ENCODE measurements at regions of chr1 and their contacts with region 1.

Region 1: DNA sequence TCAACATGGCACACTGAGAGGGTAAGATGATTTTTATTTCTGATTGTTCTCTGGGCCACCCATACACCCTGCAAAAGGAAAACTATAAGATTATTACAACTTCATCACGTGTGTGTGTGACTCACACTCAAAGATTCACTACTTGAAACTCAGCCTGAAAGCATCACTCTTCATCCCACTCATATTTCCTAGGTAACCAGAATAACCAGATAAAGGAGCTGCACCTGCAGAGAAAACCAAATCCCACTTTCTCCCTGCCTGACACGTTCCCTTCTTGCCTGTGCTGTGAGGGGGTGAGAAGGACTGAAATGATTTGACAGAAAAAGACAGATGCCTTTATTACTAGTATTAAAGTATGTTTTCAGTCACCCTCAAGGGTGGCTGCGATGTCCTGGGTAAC is 131.6 kb downstream of the TGFBR3 start:
- DNase-seq: peak; percentile 69
- ATAC-seq: peak; percentile 81
- H3K4me3 Mint-ChIP-seq: peak overlapping the region; percentile 56
- H3K27ac Mint-ChIP-seq: peak overlapping the region; percentile 92
- H3K4me1 Mint-ChIP-seq: peaks cover 51% of the 10 kb centered on the region
- H3K27me3 Mint-ChIP-seq: no peaks in the 10 kb centered on the region
- CTCF ChIP-seq: no peak

Region 2: DNA sequence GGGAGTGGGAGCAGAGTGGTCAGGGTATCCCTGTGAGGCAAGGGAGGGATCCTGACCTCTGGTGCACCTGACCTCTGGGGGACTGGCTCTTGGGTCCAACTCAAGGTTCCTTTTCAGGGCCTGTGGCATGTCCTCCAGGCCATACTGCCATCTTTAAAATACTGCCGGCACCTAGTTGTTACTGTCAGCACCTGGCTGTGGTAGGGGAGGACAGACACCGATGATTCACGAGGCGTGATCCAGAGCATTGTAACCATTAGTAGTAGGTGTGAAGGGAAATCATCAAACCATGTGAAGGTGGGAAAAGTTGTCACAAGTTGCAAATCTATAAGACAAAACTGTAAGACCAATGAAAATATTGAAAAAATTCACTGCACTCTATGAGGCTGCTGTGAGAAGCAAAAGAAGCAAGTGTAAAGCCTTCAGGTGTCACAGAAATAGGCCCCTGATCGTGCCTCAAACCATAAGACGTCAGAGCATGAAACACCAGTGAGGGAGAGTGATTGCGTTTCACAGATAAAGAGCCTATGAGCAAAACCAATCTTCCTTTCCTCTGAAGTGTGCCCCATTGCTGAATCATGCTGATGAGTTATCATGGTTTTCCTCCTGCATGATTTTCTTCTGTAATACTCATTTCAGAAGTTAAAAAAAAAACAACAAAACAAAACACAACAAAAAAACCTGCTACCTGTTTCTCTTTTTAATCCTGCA is 198.4 kb before region 1 on chr1:
- CTCF ChIA-PET with region 1: no interaction called
- POLR2A ChIA-PET with region 1: no interaction called
- intact Hi-C with region 1: loop called (anchors 10 kb)
- DNase-seq: peak; percentile 81
- ATAC-seq: peak; percentile 85
- H3K4me3 Mint-ChIP-seq: peak overlapping the region; percentile 22
- H3K27ac Mint-ChIP-seq: peak overlapping the region; percentile 91
- H3K4me1 Mint-ChIP-seq: peaks cover 81% of the 10 kb centered on the region
- H3K27me3 Mint-ChIP-seq: no peaks in the 10 kb centered on the region
- CTCF ChIP-seq: no peak

Region 3: GRCh38 chr1:91712981-91713841 is 41.1 kb before region 1 on chr1:
- CTCF ChIA-PET with region 1: no interaction called
- POLR2A ChIA-PET with region 1: no interaction called
- intact Hi-C with region 1: loop called (anchors 2 kb)
- DNase-seq: peak; percentile 74
- ATAC-seq: peak; percentile 92
- H3K4me3 Mint-ChIP-seq: peak overlapping the region; percentile 27
- H3K27ac Mint-ChIP-seq: peak overlapping the region; percentile 74
- H3K4me1 Mint-ChIP-seq: peaks cover 26% of the 10 kb centered on the region
- H3K27me3 Mint-ChIP-seq: no peaks in the 10 kb centered on the region
- CTCF ChIP-seq: no peak

Region 4: GRCh38 chr1:91732291-91733107 is 21.8 kb before region 1 on chr1:
- CTCF ChIA-PET with region 1: interaction called, 6 read pairs
- POLR2A ChIA-PET with region 1: interaction called, 6 read pairs
- intact Hi-C with region 1: loop called (anchors 1 kb)
- DNase-seq: peak; percentile 63
- ATAC-seq: peak; percentile 63
- H3K4me3 Mint-ChIP-seq: no peak overlapping the region
- H3K27ac Mint-ChIP-seq: peak overlapping the region; percentile 59
- H3K4me1 Mint-ChIP-seq: peaks cover 41% of the 10 kb centered on the region
- H3K27me3 Mint-ChIP-seq: no peaks in the 10 kb centered on the region
- CTCF ChIP-seq: no peak

Region 5: GRCh38 chr1:91803847-91804545 is 49.6 kb after region 1 on chr1:
- CTCF ChIA-PET with region 1: interaction called, 5 read pairs
- POLR2A ChIA-PET with region 1: interaction called, 5 read pairs
- intact Hi-C with region 1: loop called (anchors 1 kb)
- DNase-seq: peak; percentile 87
- ATAC-seq: peak; percentile 72
- H3K4me3 Mint-ChIP-seq: peak overlapping the region; percentile 60
- H3K27ac Mint-ChIP-seq: peak overlapping the region; percentile 93
- H3K4me1 Mint-ChIP-seq: peaks cover 46% of the 10 kb centered on the region
- H3K27me3 Mint-ChIP-seq: peaks cover 6% of the 10 kb centered on the region
- CTCF ChIP-seq: no peak

Region 6: GRCh38 chr1:91876040-91876470 is 121.7 kb after region 1 on chr1:
- CTCF ChIA-PET with region 1: no interaction called
- POLR2A ChIA-PET with region 1: no interaction called
- intact Hi-C with region 1: loop called (anchors 5 kb)
- DNase-seq: peak; percentile 80
- ATAC-seq: peak; percentile 82
- H3K4me3 Mint-ChIP-seq: no peak overlapping the region
- H3K27ac Mint-ChIP-seq: peak overlapping the region; percentile 90
- H3K4me1 Mint-ChIP-seq: peaks cover 74% of the 10 kb centered on the region
- H3K27me3 Mint-ChIP-seq: no peaks in the 10 kb centered on the region
- CTCF ChIP-seq: no peak

Measured in activated CD8-positive, alpha-beta T cell treated with anti-CD3 and anti-CD28 coated beads for 36 hours (primary cell).